ENCODE measurements at regions of chr1 and their contacts with region 1.

Region 1: GRCh38 chr1:40630488-40631381 is 34.7 kb downstream of the RIMS3 start:
- DNase-seq: peak; percentile 71 to 80 (median 74)
- ATAC-seq: peak; percentile 87
- H3K4me3 ChIP-seq: no peak overlapping the region
- H3K27ac ChIP-seq: no peak overlapping the region
- H3K4me1 ChIP-seq: peaks cover 22 to 27% of the 10 kb centered on the region in 2 experiments
- H3K27me3 ChIP-seq: peaks cover 9 to 30% of the 10 kb centered on the region in 2 experiments; a peak in 4 of 5 replicates
- CTCF ChIP-seq: peak; percentile 86 to 93 (median 93)
- EP300 ChIP-seq: no peak
- POLR2A ChIP-seq: no peak
- RAD21 ChIP-seq: peak; percentile 70 to 90

Region 2: DNA sequence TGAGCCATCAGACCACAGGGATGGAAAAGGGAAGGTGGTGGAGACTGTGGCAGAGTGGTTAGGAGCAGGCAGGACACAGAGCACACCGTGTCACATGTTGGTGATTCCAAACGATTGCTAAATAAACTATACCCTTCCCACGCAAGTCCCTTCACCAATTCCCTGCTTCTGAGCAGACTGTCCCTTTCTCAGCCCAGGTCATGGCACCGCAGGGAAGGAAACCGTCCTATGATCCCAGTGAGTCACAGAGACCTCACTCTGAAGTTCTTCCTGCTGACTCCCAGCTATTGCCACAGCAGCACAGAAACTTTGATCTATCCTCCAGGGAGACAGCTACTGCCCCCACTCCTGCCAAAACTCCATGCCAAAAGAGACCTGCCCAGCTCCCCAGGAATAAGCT is 15.6 kb after region 1 on chr1:
- CTCF ChIA-PET with region 1: no interaction called
- POLR2A ChIA-PET with region 1: interaction called, 13 read pairs
- in situ Hi-C with region 1: no loop called
- intact Hi-C with region 1: no loop called
- DNase-seq: no peak
- ATAC-seq: no peak
- H3K4me3 ChIP-seq: no peak overlapping the region
- H3K27ac ChIP-seq: no peak overlapping the region
- H3K4me1 ChIP-seq: peaks cover 14 to 17% of the 10 kb centered on the region in 2 experiments; a peak in 4 of 5 replicates
- H3K27me3 ChIP-seq: peaks cover 2 to 25% of the 10 kb centered on the region in 2 experiments; a peak in 3 of 5 replicates
- CTCF ChIP-seq: no peak
- EP300 ChIP-seq: no peak
- POLR2A ChIP-seq: no peak
- RAD21 ChIP-seq: no peak

Region 3: DNA sequence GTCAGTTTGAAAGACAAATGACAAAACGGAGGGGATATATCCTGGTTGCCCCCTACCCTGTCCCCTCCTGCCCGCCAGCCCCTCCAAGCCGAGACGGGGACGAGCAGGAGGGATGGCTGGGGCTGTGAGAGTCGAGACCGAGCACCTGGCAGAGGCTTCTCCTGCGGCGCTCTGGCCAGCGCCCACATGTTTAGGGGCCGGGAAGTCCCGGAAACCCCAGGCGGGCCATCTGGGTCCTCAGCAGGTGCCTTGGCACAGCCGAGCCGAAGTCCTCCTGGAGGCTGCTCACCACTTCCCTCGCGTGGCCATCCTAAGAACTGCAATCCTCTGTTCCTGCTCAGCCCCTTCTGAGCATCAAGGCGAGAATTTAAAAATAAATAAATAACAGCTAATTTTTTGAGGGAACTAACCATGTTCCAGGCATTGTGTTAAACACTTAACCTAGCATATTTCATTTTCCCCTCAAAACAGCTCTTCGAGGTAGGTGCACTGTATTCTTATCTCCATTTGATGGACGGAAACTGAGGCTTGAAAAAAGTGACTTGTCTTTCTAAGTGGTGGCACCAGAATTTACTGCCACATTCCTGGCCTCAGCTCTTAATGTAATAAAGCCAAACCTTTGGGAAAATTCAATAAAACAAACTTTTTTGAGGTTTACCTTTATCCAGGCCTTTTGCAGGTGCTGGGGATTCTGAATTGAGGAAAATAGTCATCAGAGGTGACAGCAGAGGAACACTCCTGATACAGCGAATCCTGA is 38.2 kb after region 1 on chr1:
- CTCF ChIA-PET with region 1: interaction called, 16 read pairs
- POLR2A ChIA-PET with region 1: interaction called, 4 read pairs
- in situ Hi-C with region 1: no loop called
- intact Hi-C with region 1: loop called (anchors 1 kb)
- DNase-seq: peak; percentile 79 to 86 (median 84)
- ATAC-seq: peak; percentile 67
- H3K4me3 ChIP-seq: no peak overlapping the region
- H3K27ac ChIP-seq: no peak overlapping the region
- H3K4me1 ChIP-seq: peaks cover 4 to 11% of the 10 kb centered on the region in 2 experiments; a peak in 2 of 5 replicates
- H3K27me3 ChIP-seq: peaks cover 0 to 19% of the 10 kb centered on the region in 2 experiments; a peak in 3 of 5 replicates
- CTCF ChIP-seq: peak; percentile 94 to 97 (median 96)
- EP300 ChIP-seq: no peak
- POLR2A ChIP-seq: no peak
- RAD21 ChIP-seq: peak; percentile 78 to 89